ENCODE measurements at regions of chr19 and their contacts with region 1.

Region 1: GRCh38 chr19:18117692-18118378 is 20.3 kb downstream of the MAST3 start:
- DNase-seq: peak; percentile 98 to 99
- ATAC-seq: peak; percentile 89 to 96 (median 92)
- H3K4me3 ChIP-seq: peak overlapping the region; percentile 83
- H3K4me3 Mint-ChIP-seq: peak overlapping the region; percentile 91
- H3K27ac ChIP-seq: peak overlapping the region; percentile 74
- H3K27ac Mint-ChIP-seq: peak overlapping the region; percentile 91 to 99
- H3K4me1 ChIP-seq: peaks cover 46% of the 10 kb centered on the region
- H3K4me1 Mint-ChIP-seq: peaks cover 30 to 61% of the 10 kb centered on the region in 2 donors
- H3K27me3 ChIP-seq: no peaks in the 10 kb centered on the region
- H3K27me3 Mint-ChIP-seq: no peaks in the 10 kb centered on the region
- CTCF ChIP-seq: no peak

Region 2: GRCh38 chr19:18167975-18168645 is 50.3 kb after region 1 on chr19:
- intact Hi-C with region 1: loop called (anchors 1 kb)
- DNase-seq: peak; percentile 54 to 81
- ATAC-seq: peak; percentile 84 to 92 (median 90)
- H3K4me3 ChIP-seq: no peak overlapping the region
- H3K4me3 Mint-ChIP-seq: no peak overlapping the region
- H3K27ac ChIP-seq: peak overlapping the region; percentile 15
- H3K27ac Mint-ChIP-seq: no peak overlapping the region
- H3K4me1 ChIP-seq: peaks cover 47% of the 10 kb centered on the region
- H3K4me1 Mint-ChIP-seq: peaks cover 5 to 25% of the 10 kb centered on the region in 2 donors
- H3K27me3 ChIP-seq: no peaks in the 10 kb centered on the region
- H3K27me3 Mint-ChIP-seq: no peaks in the 10 kb centered on the region
- CTCF ChIP-seq: peak; percentile 73

Region 3: DNA sequence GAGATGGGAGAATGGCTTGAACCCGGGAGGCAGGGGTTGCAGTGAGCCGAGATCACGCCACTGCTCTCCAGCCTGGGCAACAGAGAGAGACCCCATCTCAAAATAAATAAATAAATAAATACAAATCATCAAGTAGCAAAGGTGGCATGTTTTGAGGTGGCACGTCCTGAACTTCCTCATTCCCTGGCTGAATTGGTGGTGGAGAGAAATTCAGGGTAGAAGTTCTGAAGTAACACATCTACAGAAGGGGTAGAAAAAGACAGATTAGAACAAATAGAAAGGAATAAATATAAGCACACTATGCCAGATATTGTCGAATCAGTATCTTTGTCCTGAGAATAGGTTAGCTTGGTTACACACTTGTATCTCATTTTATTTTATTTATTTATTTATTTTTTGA is 62.1 kb after region 1 on chr19:
- intact Hi-C with region 1: no loop called
- DNase-seq: no peak
- ATAC-seq: no peak
- H3K4me3 ChIP-seq: no peak overlapping the region
- H3K4me3 Mint-ChIP-seq: no peak overlapping the region
- H3K27ac ChIP-seq: no peak overlapping the region
- H3K27ac Mint-ChIP-seq: no peak overlapping the region
- H3K4me1 ChIP-seq: peaks cover 13% of the 10 kb centered on the region
- H3K4me1 Mint-ChIP-seq: no peaks in the 10 kb centered on the region
- H3K27me3 ChIP-seq: no peaks in the 10 kb centered on the region
- H3K27me3 Mint-ChIP-seq: no peaks in the 10 kb centered on the region
- CTCF ChIP-seq: no peak

Measured in natural killer cell (primary cell).